Naive thymus-derived CD4-positive, alpha-beta T cell (primary cell): ENCODE measurements at regions of chr1 and their contacts with region 1.

Region 1: DNA sequence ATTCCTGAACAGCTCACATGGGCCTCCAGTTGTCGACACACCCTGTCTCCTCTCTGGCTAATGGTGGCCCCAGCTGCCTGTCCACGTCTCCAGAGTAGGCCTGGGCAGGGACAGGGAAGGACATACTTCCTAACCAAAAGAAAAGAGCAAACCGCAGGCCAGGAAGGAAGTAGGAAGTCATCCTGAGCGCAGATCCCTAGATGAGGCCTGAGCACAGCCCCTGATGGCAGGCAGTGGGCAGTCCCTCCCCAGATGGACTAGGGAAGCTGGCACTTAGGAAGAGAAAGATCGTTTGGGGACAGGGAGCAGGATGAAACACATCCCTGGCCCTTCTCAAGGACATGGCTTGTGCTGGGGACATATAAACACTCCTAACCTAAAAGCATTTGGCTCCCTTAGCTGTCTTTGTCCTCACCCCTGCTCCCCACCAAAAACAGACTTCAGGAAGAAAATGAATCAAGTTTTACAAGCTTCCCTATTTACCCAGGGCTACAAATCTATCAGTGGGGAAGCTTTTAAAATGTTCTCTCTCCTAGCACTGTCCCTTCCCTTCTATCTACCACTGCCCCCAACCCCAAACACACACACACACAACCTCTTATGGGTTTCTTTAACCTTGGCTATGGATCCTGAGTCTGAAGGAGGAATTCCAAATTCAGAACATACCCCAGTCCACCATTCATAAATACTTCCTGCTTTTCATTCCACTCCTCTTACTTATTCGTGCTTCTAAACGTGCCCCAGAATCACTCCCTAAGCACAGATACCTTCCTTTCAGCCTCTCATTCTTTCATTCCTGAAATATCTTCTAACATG is 21.1 kb downstream of the SSBP3 start:
- DNase-seq: no peak
- ATAC-seq: no peak
- H3K4me3 ChIP-seq: no peak overlapping the region
- H3K4me3 Mint-ChIP-seq: peak overlapping the region in 1 of 10 donors; percentile 18
- H3K27ac ChIP-seq: no peak overlapping the region
- H3K27ac Mint-ChIP-seq: peak overlapping the region; percentile 32 to 82 (median 57)
- H3K4me1 ChIP-seq: peaks cover 0 to 10% of the 10 kb centered on the region in 2 donors
- H3K4me1 Mint-ChIP-seq: peaks cover 32 to 82% (median 74%) of the 10 kb centered on the region in 7 donors
- H3K27me3 ChIP-seq: no peaks in the 10 kb centered on the region
- H3K27me3 Mint-ChIP-seq: no peaks in the 10 kb centered on the region

Region 2: DNA sequence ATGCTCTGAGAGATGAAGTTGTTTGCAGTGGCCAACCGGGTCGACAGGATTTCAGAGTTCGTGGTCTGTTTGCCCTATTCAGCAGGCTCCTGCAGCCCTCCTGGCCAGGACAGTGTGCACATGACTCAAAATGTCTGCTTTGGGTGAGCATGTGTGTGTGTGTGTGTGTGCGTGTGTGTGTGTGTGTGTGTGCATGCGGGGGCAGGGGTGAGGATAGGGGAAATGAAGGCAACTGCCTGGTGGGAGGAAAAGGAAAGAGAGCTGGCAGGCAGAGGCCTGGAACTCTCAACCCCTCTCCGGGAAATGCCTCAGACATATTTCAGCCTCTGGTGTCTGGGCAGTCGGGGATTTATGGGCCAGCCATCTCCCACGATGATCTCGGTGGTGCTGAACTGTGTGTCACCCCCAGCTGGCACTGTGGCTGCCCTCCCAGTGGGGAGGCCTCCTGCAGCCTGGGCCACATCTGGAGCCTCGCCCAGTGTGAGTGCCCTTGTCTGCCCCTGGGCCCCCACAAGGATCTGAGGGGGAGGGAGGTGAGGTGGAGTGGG is 247.5 kb before region 1 on chr1:
- CTCF ChIA-PET with region 1: no interaction called
- POLR2A ChIA-PET with region 1: no interaction called
- intact Hi-C with region 1: no loop called
- DNase-seq: no peak
- ATAC-seq: no peak
- H3K4me3 ChIP-seq: no peak overlapping the region
- H3K4me3 Mint-ChIP-seq: no peak overlapping the region
- H3K27ac ChIP-seq: no peak overlapping the region
- H3K27ac Mint-ChIP-seq: peak overlapping the region in 1 of 9 donors; percentile 66
- H3K4me1 ChIP-seq: no peaks in the 10 kb centered on the region
- H3K4me1 Mint-ChIP-seq: no peaks in the 10 kb centered on the region
- H3K27me3 ChIP-seq: no peaks in the 10 kb centered on the region
- H3K27me3 Mint-ChIP-seq: peaks cover 0 to 2% (median 0%) of the 10 kb centered on the region in 5 donors

Region 3: DNA sequence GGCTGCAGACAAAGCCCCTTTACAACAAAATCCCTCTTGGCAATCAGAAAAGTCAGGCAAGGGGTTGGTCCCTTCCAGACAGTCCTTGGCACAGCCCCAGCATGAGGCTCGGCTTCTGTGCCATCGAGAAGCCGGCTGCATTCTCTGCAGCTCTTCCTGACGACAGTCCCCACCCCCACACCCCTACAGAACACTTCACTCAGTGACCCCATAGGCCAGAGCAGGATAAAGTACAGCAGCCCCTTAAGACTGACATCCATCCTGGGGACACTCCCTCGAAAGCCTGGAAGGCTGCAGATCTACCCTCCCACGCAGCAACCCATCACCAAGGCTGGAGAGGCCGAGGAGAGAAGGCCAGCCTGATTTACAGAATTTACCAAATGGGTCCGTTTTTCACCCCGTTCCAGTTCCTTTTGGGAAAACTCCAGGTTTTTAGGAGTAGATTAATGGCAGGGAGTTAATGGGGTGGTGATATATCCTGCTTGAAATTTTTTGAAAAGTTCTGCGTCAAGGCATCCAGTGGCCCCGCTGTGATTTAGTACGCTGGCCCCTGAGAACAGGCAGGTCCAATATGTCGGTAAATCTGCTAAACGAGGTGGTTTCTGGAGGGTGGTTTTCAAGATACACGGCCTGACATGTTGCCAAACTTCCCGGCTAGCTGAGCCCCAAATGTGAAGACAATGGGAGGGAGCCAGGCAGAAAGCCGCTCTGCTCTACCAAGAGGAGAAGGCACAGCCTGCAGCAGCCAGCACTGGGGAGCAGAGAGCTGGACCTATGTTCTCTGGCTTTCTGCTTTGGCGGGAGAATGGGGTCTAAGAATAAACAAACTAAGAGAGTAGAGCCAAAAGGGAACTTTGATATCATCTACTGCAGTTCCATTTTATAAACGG is 60.6 kb before region 1 on chr1:
- CTCF ChIA-PET with region 1: no interaction called
- POLR2A ChIA-PET with region 1: no interaction called
- intact Hi-C with region 1: loop called in 1 of 2 experiments (anchors 5 kb)
- DNase-seq: no peak
- ATAC-seq: no peak
- H3K4me3 ChIP-seq: no peak overlapping the region
- H3K4me3 Mint-ChIP-seq: no peak overlapping the region
- H3K27ac ChIP-seq: no peak overlapping the region
- H3K27ac Mint-ChIP-seq: peak overlapping the region in 8 of 9 donors; percentile 11 to 88 (median 78)
- H3K4me1 ChIP-seq: peaks cover 0 to 8% of the 10 kb centered on the region in 2 donors
- H3K4me1 Mint-ChIP-seq: peaks cover 30 to 96% (median 90%) of the 10 kb centered on the region in 7 donors
- H3K27me3 ChIP-seq: no peaks in the 10 kb centered on the region
- H3K27me3 Mint-ChIP-seq: no peaks in the 10 kb centered on the region

Region 4: DNA sequence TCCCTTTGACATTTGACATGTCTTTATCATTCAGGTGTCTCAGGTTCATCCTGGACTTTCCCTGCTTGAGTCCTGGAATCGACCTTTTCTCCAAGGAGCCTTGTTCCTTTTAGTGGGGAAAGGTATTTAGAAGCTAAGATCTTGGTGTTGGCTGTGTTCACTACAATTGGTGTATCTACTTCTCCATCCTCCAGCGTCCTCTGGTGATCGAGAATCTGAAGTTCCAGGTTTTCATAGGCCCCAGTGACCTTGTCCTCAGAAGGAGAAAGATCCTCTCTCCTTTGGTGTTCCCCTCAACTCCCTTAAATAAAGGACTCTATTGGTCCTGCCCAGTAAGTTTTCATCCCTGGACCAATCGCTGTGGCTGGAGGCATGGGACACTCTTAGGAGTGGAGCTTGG is 278.6 kb after region 1 on chr1:
- CTCF ChIA-PET with region 1: no interaction called
- POLR2A ChIA-PET with region 1: no interaction called
- intact Hi-C with region 1: no loop called
- DNase-seq: no peak
- ATAC-seq: no peak
- H3K4me3 ChIP-seq: no peak overlapping the region
- H3K4me3 Mint-ChIP-seq: no peak overlapping the region
- H3K27ac ChIP-seq: no peak overlapping the region
- H3K27ac Mint-ChIP-seq: no peak overlapping the region
- H3K4me1 ChIP-seq: no peaks in the 10 kb centered on the region
- H3K4me1 Mint-ChIP-seq: no peaks in the 10 kb centered on the region
- H3K27me3 ChIP-seq: no peaks in the 10 kb centered on the region
- H3K27me3 Mint-ChIP-seq: peaks cover 0 to 4% (median 1%) of the 10 kb centered on the region in 5 donors